ENCODE measurements at regions of chr18 and their contacts with region 1.

Region 1: GRCh38 chr18:48300463-48300961 is 108.7 kb downstream of the ZBTB7C start:
- DNase-seq: peak in 2 of 14 experiments; percentile 6 to 14
- ATAC-seq: no peak
- H3K4me3 ChIP-seq: no peak overlapping the region
- H3K4me3 Mint-ChIP-seq: no peak overlapping the region
- H3K27ac ChIP-seq: no peak overlapping the region
- H3K27ac Mint-ChIP-seq: no peak overlapping the region
- H3K4me1 ChIP-seq: peaks cover 10% of the 10 kb centered on the region
- H3K4me1 Mint-ChIP-seq: peaks cover 7% of the 10 kb centered on the region
- H3K27me3 ChIP-seq: no peaks in the 10 kb centered on the region
- H3K27me3 Mint-ChIP-seq: no peaks in the 10 kb centered on the region
- CTCF ChIP-seq: no peak

Region 2: GRCh38 chr18:48139431-48140347 is 160.8 kb before region 1 on chr18:
- CTCF ChIA-PET with region 1: no interaction called
- POLR2A ChIA-PET with region 1: no interaction called
- intact Hi-C with region 1: loop called in 1 of 2 experiments (anchors 10 kb)
- DNase-seq: no peak
- ATAC-seq: no peak
- H3K4me3 ChIP-seq: no peak overlapping the region
- H3K4me3 Mint-ChIP-seq: no peak overlapping the region
- H3K27ac ChIP-seq: no peak overlapping the region
- H3K27ac Mint-ChIP-seq: no peak overlapping the region
- H3K4me1 ChIP-seq: peaks cover 5% of the 10 kb centered on the region
- H3K4me1 Mint-ChIP-seq: peaks cover 7% of the 10 kb centered on the region
- H3K27me3 ChIP-seq: peaks cover 23 to 46% of the 10 kb centered on the region in 2 experiments
- H3K27me3 Mint-ChIP-seq: peaks cover 64% of the 10 kb centered on the region
- CTCF ChIP-seq: no peak

Measured in CD4-positive, alpha-beta T cell (primary cell).